ENCODE measurements at regions of chr3 and their contacts with region 1.

Region 1: GRCh38 chr3:112437146-112438022 is 61.9 kb downstream of the BTLA start:
- DNase-seq: peak; percentile 78
- H3K4me3 Mint-ChIP-seq: no peak overlapping the region
- H3K27ac Mint-ChIP-seq: peak overlapping the region; percentile 74
- H3K4me1 Mint-ChIP-seq: peaks cover 38% of the 10 kb centered on the region
- H3K27me3 Mint-ChIP-seq: no peaks in the 10 kb centered on the region

Region 2: GRCh38 chr3:112327371-112327951 is 109.9 kb before region 1 on chr3:
- intact Hi-C with region 1: loop called (anchors 1 kb)
- DNase-seq: peak; percentile 87
- H3K4me3 Mint-ChIP-seq: no peak overlapping the region
- H3K27ac Mint-ChIP-seq: no peak overlapping the region
- H3K4me1 Mint-ChIP-seq: peaks cover 5% of the 10 kb centered on the region
- H3K27me3 Mint-ChIP-seq: peaks cover 8% of the 10 kb centered on the region

Region 3: DNA sequence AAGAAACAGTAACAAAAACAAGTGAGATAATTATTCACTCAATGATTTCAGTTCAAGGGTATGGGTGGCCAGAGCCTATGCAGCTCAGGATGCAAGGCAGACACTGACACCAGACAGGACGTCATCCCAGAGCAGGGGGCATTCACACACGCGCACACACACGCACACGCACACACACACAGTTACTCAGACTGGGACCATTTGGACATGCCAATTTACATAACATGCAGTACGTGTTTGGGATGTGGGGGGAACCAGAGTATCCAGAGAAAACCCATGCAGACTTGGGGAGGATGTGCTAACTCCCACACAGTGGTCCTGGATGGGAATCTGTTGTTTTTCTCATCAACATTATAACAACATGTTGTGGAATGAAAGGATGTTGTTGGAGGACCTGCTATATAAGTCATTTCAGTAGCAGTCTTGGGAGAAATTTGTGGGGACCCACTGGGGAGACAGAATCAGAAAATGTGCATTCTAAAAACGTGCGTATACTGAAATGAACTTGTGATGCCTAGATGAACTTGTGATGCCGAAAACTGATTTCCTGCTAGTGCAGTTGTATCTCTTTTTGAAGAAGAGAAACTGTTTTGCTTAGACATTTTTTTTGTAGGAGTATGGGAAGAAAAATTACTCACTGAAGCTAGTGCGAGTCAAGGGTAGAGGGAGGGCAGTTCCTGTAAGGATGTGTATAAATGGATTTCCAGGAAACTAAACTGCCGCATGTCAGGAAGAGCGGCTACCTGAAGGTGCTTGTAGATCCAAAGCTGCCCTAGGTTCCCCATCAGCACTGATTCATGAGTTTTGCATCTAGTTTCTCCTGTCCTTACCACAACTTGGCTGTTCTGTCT is 79.2 kb before region 1 on chr3:
- intact Hi-C with region 1: loop called (anchors 2 kb)
- DNase-seq: peak; percentile 76
- H3K4me3 Mint-ChIP-seq: peak overlapping the region; percentile 79
- H3K27ac Mint-ChIP-seq: peak overlapping the region; percentile 93
- H3K4me1 Mint-ChIP-seq: peaks cover 35% of the 10 kb centered on the region
- H3K27me3 Mint-ChIP-seq: no peaks in the 10 kb centered on the region

Region 4: DNA sequence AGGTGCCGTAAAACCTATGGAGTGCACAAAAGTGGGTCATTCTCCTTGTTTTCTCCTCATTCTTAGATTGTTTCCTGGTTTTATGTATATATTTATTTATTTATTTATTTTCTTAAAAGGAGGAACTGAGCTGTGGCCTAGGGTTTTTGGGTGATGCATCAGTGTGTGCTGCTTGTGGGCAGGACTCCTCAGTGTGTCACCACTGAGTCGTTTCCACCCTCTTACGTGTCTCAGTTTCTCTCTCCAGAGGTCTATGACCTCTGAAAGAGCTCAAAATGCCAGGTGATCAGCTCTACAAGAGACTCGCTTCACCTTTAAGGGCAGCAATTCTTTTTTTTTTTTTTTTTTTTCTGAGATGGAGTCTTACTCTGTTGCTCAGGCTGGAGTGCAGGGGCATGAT is 31.5 kb before region 1 on chr3:
- intact Hi-C with region 1: loop called (anchors 2 kb)
- DNase-seq: peak; percentile 56
- H3K4me3 Mint-ChIP-seq: no peak overlapping the region
- H3K27ac Mint-ChIP-seq: peak overlapping the region; percentile 20
- H3K4me1 Mint-ChIP-seq: peaks cover 14% of the 10 kb centered on the region
- H3K27me3 Mint-ChIP-seq: no peaks in the 10 kb centered on the region

Region 5: GRCh38 chr3:112489674-112490479 is 52.5 kb after region 1 on chr3:
- intact Hi-C with region 1: loop called (anchors 2 kb)
- DNase-seq: peak; percentile 57
- H3K4me3 Mint-ChIP-seq: peak overlapping the region; percentile 76
- H3K27ac Mint-ChIP-seq: peak overlapping the region; percentile 87
- H3K4me1 Mint-ChIP-seq: peaks cover 54% of the 10 kb centered on the region
- H3K27me3 Mint-ChIP-seq: no peaks in the 10 kb centered on the region

Measured in activated CD4-positive, alpha-beta T cell treated with anti-CD3 and anti-CD28 coated beads, Interleukin-2, amount 10 ng/mL, durations not matched to agents 24 days and 14 days (primary cell).